ENCODE measurements at regions of chr12 and their contacts with region 1.

Region 1: DNA sequence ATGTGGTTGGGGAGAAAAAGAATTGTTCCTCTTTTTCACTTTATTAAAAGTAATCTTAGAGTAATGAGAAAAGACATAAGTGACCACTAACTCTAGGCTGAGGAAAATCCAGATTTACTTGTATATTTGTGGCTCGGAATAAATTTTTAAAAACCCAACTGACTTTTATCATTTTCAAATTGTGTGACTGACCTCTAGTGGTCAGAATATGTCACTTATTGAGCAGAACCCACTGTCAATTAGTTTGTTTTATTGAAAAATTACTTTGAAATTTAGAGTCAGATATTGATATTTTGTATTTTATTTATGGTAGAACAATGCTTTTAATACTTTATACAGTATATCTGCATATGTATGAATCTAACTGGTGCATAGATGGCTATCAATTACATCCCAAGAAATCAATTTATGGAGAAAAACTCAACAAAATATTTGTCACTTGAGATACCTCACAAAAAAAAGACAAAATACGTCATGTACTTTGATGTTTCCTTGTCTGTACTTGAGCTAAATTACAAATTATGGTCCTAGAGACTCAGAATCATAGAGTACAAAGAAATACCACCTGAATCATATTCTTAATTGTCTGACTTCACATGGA is 229.4 kb downstream of the CNTN1 start:
- DNase-seq: no peak
- ATAC-seq: no peak
- H3K4me3 Mint-ChIP-seq: no peak overlapping the region
- H3K27ac Mint-ChIP-seq: no peak overlapping the region
- H3K4me1 Mint-ChIP-seq: no peaks in the 10 kb centered on the region
- H3K27me3 Mint-ChIP-seq: peaks cover 4% of the 10 kb centered on the region
- CTCF ChIP-seq: peak; percentile 41

Region 2: DNA sequence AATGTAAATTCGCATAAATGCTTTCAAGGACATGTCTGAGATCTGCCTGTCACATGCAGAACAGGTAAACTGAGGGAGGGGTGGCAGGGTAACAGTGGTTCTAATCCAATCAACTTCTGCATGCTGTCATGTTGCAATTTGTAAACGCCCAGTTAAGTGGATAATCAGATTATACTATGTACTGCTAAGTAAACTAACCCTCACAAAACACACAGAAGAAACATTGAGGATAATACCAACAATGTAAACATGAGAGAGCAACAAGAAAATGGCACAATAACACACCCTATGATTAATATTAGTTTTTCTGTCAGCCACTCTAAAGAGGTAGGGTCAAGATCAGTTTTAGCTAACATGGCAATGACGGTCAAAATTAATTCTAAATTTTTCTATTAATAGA is 1602.5 kb before region 1 on chr12:
- CTCF ChIA-PET with region 1: no interaction called
- POLR2A ChIA-PET with region 1: no interaction called
- intact Hi-C with region 1: loop called (anchors 1 kb)
- DNase-seq: no peak
- ATAC-seq: no peak
- H3K4me3 Mint-ChIP-seq: no peak overlapping the region
- H3K27ac Mint-ChIP-seq: no peak overlapping the region
- H3K4me1 Mint-ChIP-seq: no peaks in the 10 kb centered on the region
- H3K27me3 Mint-ChIP-seq: no peaks in the 10 kb centered on the region
- CTCF ChIP-seq: no peak

Region 3: GRCh38 chr12:40010899-40011774 is 910.5 kb before region 1 on chr12:
- CTCF ChIA-PET with region 1: interaction called, 4 read pairs
- POLR2A ChIA-PET with region 1: no interaction called
- intact Hi-C with region 1: loop called (anchors 1 kb)
- DNase-seq: no peak
- ATAC-seq: peak; percentile 84
- H3K4me3 Mint-ChIP-seq: peak overlapping the region; percentile 68
- H3K27ac Mint-ChIP-seq: peak overlapping the region; percentile 20
- H3K4me1 Mint-ChIP-seq: peaks cover 17% of the 10 kb centered on the region
- H3K27me3 Mint-ChIP-seq: no peaks in the 10 kb centered on the region
- CTCF ChIP-seq: peak; percentile 28

Region 4: DNA sequence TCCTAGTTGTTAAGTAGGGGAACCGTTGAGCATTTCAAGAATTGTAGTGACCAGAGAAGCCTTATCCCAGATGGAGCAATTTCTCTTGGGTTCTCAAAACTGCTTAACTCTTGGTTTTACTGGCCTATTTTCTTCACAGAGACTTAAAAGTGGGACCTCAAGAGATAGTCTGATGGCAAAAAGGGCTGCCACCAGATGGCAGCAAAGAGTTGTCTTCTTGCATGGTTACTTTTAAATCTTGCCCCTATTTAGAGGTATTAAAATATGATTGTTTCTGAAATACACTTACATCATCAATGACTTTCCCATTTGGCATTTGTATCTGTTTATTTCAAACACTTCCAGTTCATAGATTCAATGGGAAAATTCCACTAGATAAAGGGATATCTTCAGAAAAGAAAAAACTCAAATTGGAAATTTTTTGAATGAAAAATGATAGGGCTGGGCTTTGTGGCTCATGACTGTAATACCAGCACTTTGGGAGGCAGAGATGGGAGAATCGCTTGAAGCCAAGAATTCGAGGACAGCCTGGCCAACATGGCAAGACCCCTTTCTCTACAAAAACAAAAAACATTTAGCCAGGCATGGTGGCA is 299.3 kb before region 1 on chr12:
- CTCF ChIA-PET with region 1: interaction called, 3 read pairs
- POLR2A ChIA-PET with region 1: no interaction called
- intact Hi-C with region 1: loop called (anchors 1 kb)
- DNase-seq: no peak
- ATAC-seq: no peak
- H3K4me3 Mint-ChIP-seq: no peak overlapping the region
- H3K27ac Mint-ChIP-seq: no peak overlapping the region
- H3K4me1 Mint-ChIP-seq: no peaks in the 10 kb centered on the region
- H3K27me3 Mint-ChIP-seq: no peaks in the 10 kb centered on the region
- CTCF ChIP-seq: no peak

Region 5: GRCh38 chr12:40903040-40903439 is 18.6 kb before region 1 on chr12:
- CTCF ChIA-PET with region 1: no interaction called
- POLR2A ChIA-PET with region 1: no interaction called
- intact Hi-C with region 1: no loop called
- DNase-seq: no peak
- ATAC-seq: no peak
- H3K4me3 Mint-ChIP-seq: no peak overlapping the region
- H3K27ac Mint-ChIP-seq: no peak overlapping the region
- H3K4me1 Mint-ChIP-seq: no peaks in the 10 kb centered on the region
- H3K27me3 Mint-ChIP-seq: no peaks in the 10 kb centered on the region
- CTCF ChIP-seq: no peak

Region 6: GRCh38 chr12:40946612-40947194 is 25.0 kb after region 1 on chr12:
- CTCF ChIA-PET with region 1: no interaction called
- POLR2A ChIA-PET with region 1: interaction called, 13 read pairs
- intact Hi-C with region 1: no loop called
- DNase-seq: no peak
- ATAC-seq: peak; percentile 25
- H3K4me3 Mint-ChIP-seq: no peak overlapping the region
- H3K27ac Mint-ChIP-seq: no peak overlapping the region
- H3K4me1 Mint-ChIP-seq: no peaks in the 10 kb centered on the region
- H3K27me3 Mint-ChIP-seq: peaks cover 7% of the 10 kb centered on the region
- CTCF ChIP-seq: no peak

Region 7: GRCh38 chr12:41073633-41074472 is 152.2 kb after region 1 on chr12:
- CTCF ChIA-PET with region 1: no interaction called
- POLR2A ChIA-PET with region 1: no interaction called
- intact Hi-C with region 1: no loop called
- DNase-seq: no peak
- ATAC-seq: no peak
- H3K4me3 Mint-ChIP-seq: no peak overlapping the region
- H3K27ac Mint-ChIP-seq: no peak overlapping the region
- H3K4me1 Mint-ChIP-seq: no peaks in the 10 kb centered on the region
- H3K27me3 Mint-ChIP-seq: no peaks in the 10 kb centered on the region
- CTCF ChIP-seq: no peak